Adrenal gland (tissue), 19 donors: ENCODE measurements at regions of chr5 and their contacts with region 1.

Region 1: GRCh38 chr5:126594676-126595485 is at the start of gene ALDH7A1:
- DNase-seq: peak; percentile 90 to 97 (median 95)
- H3K4me3 ChIP-seq: peak within 1 kb of the TSS in 2 of 4 donors; percentile 50 to 66
- H3K27ac ChIP-seq: peak within 1 kb of the TSS in 4 of 5 donors; percentile 9 to 88 (median 74)
- H3K4me1 ChIP-seq: peaks cover 3 to 13% of the 10 kb centered on the region in 2 donors
- H3K27me3 ChIP-seq: no peaks in the 10 kb centered on the region
- CTCF ChIP-seq: peak in 5 of 6 experiments; percentile 8 to 52 (median 41)
- POLR2A ChIP-seq: peak; percentile 42 to 82
- total RNA-seq, gene ALDH7A1: 34.6 to 112 (median 55.3) TPM

Region 2: DNA sequence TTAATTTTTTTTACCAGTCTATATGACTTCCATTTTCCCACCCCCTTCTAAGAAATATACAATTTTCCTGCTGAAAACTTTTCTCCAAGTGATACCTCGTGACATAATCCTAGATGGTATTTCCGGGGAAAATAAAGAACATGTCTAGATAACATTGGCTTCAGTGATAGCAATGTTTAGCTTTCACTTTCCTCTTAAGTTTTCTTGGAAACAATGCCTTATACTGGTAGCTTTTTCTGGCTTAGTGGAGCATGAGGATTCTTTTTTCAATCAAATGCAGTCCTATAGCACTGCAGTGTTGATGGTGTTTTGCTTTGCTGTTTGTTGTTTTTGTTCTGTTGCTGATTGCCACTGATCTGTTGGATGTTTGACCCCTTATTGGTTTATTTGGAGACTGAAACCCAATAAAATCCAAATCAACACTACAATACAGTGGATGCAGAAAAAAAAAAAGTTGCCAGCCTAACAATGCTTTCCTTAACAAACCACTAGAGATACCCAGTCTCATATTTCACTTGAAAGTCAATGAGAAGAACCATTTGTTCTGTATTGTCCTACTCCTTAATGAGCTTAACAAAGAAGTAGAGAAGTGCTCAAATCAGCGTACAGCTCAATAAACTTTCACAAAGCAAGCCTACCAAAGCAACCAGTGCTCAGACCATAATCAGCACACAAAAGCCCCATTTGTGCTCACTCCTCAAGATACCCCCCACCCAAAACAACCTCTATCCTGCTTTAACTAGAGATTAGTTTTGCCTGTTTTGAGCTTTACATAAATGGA is 245.8 kb before region 1 on chr5:
- intact Hi-C with region 1: loop called in 1 of 2 experiments (anchors 5 kb)
- DNase-seq: no peak
- H3K4me3 ChIP-seq: no peak overlapping the region
- H3K27ac ChIP-seq: peak overlapping the region in 2 of 5 donors; percentile 7 to 34
- H3K4me1 ChIP-seq: no peaks in the 10 kb centered on the region
- H3K27me3 ChIP-seq: no peaks in the 10 kb centered on the region
- CTCF ChIP-seq: no peak
- POLR2A ChIP-seq: no peak

Region 3: DNA sequence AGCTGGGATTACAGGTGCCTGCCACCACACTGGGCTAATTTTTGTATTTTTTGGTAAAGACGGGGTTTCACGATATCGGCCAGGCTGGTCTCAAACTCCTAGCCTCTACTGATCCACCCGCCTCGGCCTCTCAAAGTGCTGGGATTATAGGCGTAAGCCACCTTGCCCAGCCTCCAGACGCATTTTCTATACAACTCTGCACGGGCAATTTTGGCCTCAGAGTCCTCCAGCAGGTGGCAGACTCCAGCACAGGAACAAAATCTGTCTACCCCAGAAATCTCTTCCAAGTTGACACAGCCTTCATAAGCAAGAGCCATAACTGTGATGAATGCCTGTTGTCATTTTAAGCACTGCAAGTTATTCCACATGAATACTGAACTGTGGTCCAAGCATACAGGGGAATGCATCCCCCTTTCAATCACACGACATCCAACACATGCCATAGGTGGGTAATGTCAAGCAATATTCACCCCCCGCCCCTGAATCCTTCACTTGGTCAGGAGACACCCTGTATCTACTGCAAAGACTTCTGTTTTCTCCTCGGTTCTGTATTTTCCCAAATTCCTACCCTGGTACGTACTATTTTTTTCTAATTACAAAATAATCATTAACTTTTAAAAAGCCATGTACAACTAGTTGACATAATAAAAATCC is 50.7 kb before region 1 on chr5:
- intact Hi-C with region 1: loop called (anchors 10 kb)
- DNase-seq: peak in 6 of 7 donors; percentile 24 to 69 (median 38)
- H3K4me3 ChIP-seq: no peak overlapping the region
- H3K27ac ChIP-seq: no peak overlapping the region
- H3K4me1 ChIP-seq: peaks cover 0 to 2% of the 10 kb centered on the region in 2 donors
- H3K27me3 ChIP-seq: no peaks in the 10 kb centered on the region
- CTCF ChIP-seq: peak; percentile 38 to 48 (median 40)
- POLR2A ChIP-seq: no peak

Region 4: DNA sequence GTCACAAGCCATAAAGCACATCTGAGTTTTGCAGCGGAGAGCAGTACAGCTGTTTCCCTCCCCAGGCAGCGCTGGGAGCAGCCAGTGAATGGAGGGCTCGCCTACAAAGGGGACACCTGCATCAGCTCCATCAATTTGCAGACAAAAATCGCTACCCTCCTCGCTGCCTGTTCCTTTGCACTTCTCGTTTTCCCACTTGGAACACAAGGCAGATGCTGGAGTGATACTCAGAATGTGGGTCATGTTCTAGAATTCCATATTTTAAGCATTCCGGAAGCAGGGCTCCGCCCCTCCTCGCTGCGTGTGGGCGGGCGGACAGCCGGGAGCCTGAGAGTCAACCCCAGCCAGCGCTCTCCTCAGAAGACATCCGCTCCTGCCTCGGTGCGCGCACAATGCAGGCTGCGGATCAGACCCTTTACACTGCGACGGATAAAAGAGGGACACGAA is 274.1 kb after region 1 on chr5:
- intact Hi-C with region 1: no loop called
- DNase-seq: peak in 2 of 7 donors; percentile 38 to 68
- H3K4me3 ChIP-seq: no peak overlapping the region
- H3K27ac ChIP-seq: no peak overlapping the region
- H3K4me1 ChIP-seq: no peaks in the 10 kb centered on the region
- H3K27me3 ChIP-seq: no peaks in the 10 kb centered on the region
- CTCF ChIP-seq: no peak
- POLR2A ChIP-seq: no peak